Heart right ventricle (tissue), 16 donors: ENCODE measurements at regions of chr22 and their contacts with region 1.

Region 1: DNA sequence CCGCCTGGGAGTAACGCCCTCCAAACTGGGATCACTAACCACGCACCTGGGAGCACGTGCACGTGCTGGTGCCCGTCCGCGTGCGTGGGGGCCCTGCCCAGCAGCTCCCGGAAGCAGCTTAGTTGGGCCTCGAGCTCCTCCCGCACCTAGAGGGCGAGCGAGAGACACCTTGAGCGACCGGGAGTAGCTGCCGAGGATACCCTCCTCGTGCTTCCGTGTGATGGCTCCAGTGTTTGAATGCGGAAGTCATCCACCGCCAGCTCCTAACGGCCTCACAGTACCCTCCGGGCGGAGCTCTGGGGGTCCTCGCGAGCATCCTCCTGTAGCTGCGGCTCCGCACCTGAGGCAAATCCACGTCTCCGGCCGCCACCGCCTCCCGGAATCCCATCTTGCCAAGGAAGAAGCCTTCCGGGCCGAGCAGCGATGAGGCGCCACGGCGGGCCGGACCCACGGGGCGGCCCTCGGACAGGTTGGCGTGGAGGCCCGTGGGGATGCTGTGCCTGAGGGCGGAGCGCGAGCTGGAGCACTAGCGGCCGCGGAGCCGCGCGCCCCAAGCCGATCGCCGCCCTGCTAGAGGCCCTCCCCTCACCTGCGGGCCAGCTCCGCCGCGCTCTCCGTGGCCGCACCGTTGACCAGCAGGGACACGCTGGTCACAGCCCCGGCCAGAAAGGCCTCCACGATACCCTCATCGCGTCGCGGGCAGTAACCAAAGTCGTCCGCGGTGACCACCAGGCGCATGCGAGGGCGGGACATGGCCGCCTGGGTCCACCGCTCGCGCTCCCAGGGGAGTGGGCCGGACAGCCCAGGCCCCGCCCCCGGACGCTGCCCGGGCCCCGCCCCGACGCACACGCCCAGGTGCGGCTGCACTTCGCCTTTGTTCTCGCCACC is at the start of gene YDJC:
- DNase-seq: peak; percentile 92 to 94
- ATAC-seq: peak; percentile 96 to 98 (median 98)
- H3K4me3 ChIP-seq: peak within 1 kb of the TSS; percentile 75 to 100 (median 88)
- H3K27ac ChIP-seq: peak within 1 kb of the TSS in 9 of 10 donors; percentile 17 to 92 (median 71)
- H3K4me1 ChIP-seq: peaks cover 0 to 39% (median 25%) of the 10 kb centered on the region in 9 donors
- H3K27me3 ChIP-seq: no peaks in the 10 kb centered on the region
- CTCF ChIP-seq: peak in 7 of 9 donors; percentile 10 to 97 (median 37)
- total RNA-seq, gene YDJC: 2.3 to 6.1 (median 4.0) TPM

Region 2: DNA sequence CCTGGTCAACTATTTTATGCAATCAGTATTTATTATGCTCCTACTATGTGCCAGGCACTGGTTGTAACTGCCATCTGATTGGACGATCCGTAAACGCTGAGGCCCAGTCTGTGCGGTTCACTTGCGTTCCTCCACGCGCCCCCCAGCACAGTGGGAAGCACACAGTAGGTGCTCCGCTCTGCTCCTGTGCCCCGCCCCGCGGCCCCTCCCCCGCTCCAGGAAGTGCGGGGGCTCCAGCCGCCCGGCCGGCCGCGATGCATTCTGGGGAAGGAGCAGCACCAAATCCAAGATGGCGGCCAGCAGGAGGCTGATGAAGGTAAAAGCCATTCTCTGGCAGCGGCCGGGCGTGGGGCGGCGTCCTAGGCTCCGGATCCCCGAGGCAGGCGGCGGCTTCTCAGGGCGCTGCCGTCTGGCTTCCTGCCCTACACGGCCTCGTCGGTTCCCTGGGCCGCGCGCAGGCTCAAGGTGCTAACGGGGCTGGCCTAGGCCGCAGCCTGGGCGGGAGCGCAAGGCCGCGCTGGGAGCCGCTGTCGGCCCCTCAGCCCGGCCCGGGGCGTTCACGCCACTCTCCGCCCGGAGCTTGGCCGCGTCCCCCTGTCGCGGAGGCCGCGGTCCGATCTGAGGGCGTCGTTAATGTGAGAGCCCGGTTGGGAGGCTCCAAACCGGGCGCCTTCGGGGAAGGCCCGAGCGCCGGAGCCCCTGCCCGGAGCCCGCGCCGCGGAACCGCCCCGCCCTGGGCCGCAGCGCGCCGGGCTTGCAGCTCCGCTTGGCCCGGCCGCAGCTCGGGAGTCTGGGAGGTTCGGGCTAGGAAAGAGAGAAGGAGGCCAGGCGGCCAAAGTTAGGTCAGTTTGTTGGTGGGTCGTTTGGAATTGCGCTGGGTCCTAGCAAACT is 61.8 kb before region 1 on chr22 and contains the start of gene UBE2L3:
- intact Hi-C with region 1: loop called in 4 of 10 experiments (anchors 5 to 10 kb)
- DNase-seq: peak; percentile 86 to 88
- ATAC-seq: peak; percentile 94 to 97 (median 96)
- H3K4me3 ChIP-seq: peak within 1 kb of the TSS; percentile 67 to 96 (median 88)
- H3K27ac ChIP-seq: peak within 1 kb of the TSS; percentile 81 to 99 (median 94)
- H3K4me1 ChIP-seq: peaks cover 26 to 45% (median 40%) of the 10 kb centered on the region in 9 donors
- H3K27me3 ChIP-seq: no peaks in the 10 kb centered on the region
- CTCF ChIP-seq: no peak
- total RNA-seq, gene UBE2L3: 43.1 to 61.3 (median 49.5) TPM

Region 3: DNA sequence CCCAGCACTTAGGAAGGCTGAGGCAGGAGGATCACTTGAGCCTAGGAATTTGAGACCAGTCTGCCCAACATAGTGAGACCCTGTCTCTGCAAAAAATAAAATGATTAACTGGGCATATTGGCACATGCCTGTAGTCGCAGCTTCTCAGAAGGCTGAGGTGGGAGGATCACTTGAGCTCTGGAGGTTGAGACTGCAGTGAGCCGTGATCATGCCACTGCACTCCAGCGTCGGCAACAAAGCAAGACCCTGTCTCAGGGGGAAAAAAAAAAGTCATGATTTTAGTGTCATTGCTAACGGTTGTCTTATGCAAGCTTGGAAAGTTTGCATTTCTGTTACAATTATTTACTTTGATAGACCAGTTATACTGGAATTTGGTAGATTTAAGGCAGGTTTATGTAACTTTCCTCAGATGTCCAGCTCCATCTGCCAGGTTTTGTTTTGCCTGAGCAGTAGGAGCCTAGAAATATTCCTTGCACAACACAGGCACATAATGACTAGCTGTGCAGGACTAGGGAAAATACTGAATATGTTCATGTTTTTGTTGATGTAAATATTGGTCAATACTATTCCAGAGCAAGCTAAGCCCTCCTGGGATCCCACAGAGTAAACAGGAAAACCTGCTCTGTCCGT is 49.9 kb before region 1 on chr22:
- intact Hi-C with region 1: loop called in 6 of 10 experiments (anchors 5 to 10 kb)
- DNase-seq: no peak
- ATAC-seq: no peak
- H3K4me3 ChIP-seq: no peak overlapping the region
- H3K27ac ChIP-seq: no peak overlapping the region
- H3K4me1 ChIP-seq: peaks cover 2 to 58% (median 38%) of the 10 kb centered on the region in 9 donors
- H3K27me3 ChIP-seq: no peaks in the 10 kb centered on the region
- CTCF ChIP-seq: no peak

Region 4: GRCh38 chr22:21587803-21588611 is 41.5 kb before region 1 on chr22:
- intact Hi-C with region 1: loop called in 2 of 10 experiments (anchors 5 kb)
- DNase-seq: no peak
- ATAC-seq: no peak
- H3K4me3 ChIP-seq: no peak overlapping the region
- H3K27ac ChIP-seq: peak overlapping the region in 1 of 10 donors; percentile 21
- H3K4me1 ChIP-seq: peaks cover 10 to 71% (median 53%) of the 10 kb centered on the region in 9 donors
- H3K27me3 ChIP-seq: no peaks in the 10 kb centered on the region
- CTCF ChIP-seq: no peak

Region 5: GRCh38 chr22:21641789-21642583 is 12.5 kb after region 1 on chr22 and contains the start of gene SDF2L1:
- intact Hi-C with region 1: loop called in 1 of 10 experiments (anchors 1 kb)
- DNase-seq: peak; percentile 98
- ATAC-seq: peak; percentile 99 to 100 (median 100)
- H3K4me3 ChIP-seq: peak within 1 kb of the TSS; percentile 51 to 91 (median 80)
- H3K27ac ChIP-seq: peak within 1 kb of the TSS in 9 of 10 donors; percentile 54 to 82 (median 66)
- H3K4me1 ChIP-seq: peaks cover 0 to 34% (median 29%) of the 10 kb centered on the region in 9 donors
- H3K27me3 ChIP-seq: no peaks in the 10 kb centered on the region
- CTCF ChIP-seq: peak in 6 of 9 donors; percentile 16 to 64 (median 37)
- total RNA-seq, gene SDF2L1: 10.8 to 41.0 (median 18.2) TPM

Region 6: GRCh38 chr22:21961886-21962654 is 332.6 kb after region 1 on chr22:
- intact Hi-C with region 1: no loop called
- DNase-seq: no peak
- ATAC-seq: peak in 5 of 8 donors; percentile 18 to 58 (median 25)
- H3K4me3 ChIP-seq: no peak overlapping the region
- H3K27ac ChIP-seq: no peak overlapping the region
- H3K4me1 ChIP-seq: peaks cover 0 to 7% (median 0%) of the 10 kb centered on the region in 9 donors
- H3K27me3 ChIP-seq: no peaks in the 10 kb centered on the region
- CTCF ChIP-seq: no peak